ENCODE measurements at regions of chr1 and their contacts with region 1.

Region 1: DNA sequence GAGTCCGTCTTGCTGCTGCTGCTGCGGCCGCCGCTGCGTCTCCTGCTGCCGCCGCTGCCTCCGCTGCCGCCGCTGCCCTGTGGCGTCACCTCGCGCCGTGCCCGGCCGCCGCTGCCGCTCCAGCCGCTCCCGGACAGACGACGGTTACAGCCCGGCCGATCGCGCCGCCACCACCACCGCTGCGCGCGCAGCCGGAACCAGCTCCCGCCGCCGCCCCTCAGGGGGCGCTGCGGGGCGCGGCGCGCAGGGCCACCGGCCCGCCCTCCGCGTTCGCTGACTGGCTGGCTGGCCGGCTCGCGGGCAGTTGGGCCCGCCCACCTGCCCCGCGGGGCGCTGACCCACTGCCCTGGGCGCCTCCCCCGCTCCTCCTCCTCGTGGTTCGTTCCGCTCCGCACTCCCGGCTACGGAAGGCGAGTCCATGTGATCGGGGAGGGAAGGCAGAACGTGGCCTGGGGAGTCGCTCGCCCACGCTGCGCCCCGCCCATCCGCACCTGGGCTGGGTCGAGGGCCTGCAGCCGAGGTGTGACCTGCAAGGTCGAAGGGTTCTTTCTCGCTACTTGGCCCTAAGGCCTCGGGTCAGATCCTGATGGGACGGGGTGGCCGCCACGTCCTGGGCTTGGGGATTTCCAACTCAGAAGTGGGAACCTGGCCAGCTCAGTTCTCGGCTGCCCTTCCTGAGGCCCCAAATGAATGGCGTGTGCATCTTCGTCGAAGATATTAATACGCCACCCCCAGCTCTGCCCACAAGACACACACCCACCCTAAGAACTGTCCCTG is at the start of gene PTP4A2:
- DNase-seq: peak; percentile 86
- H3K4me3 ChIP-seq: peak within 1 kb of the TSS; percentile 56 to 88 (median 73)
- H3K27ac ChIP-seq: peak within 1 kb of the TSS; percentile 61
- H3K4me1 ChIP-seq: peaks cover 39% of the 10 kb centered on the region
- H3K27me3 ChIP-seq: no peaks in the 10 kb centered on the region
- CTCF ChIP-seq: peak; percentile 41 to 72
- POLR2A ChIP-seq: peak; percentile 79
- total RNA-seq, gene PTP4A2: 172 and 184 TPM in 2 replicates

Region 2: GRCh38 chr1:31587720-31588394 is 350.5 kb before region 1 on chr1:
- CTCF ChIA-PET with region 1: no interaction called
- POLR2A ChIA-PET with region 1: no interaction called
- dilution Hi-C with region 1: no loop called
- intact Hi-C with region 1: loop called (anchors 10 kb)
- DNase-seq: peak; percentile 86
- H3K4me3 ChIP-seq: no peak overlapping the region
- H3K27ac ChIP-seq: peak overlapping the region; percentile 92
- H3K4me1 ChIP-seq: peaks cover 39% of the 10 kb centered on the region
- H3K27me3 ChIP-seq: no peaks in the 10 kb centered on the region
- CTCF ChIP-seq: peak; percentile 71 to 92
- POLR2A ChIP-seq: peak; percentile 81

Region 3: DNA sequence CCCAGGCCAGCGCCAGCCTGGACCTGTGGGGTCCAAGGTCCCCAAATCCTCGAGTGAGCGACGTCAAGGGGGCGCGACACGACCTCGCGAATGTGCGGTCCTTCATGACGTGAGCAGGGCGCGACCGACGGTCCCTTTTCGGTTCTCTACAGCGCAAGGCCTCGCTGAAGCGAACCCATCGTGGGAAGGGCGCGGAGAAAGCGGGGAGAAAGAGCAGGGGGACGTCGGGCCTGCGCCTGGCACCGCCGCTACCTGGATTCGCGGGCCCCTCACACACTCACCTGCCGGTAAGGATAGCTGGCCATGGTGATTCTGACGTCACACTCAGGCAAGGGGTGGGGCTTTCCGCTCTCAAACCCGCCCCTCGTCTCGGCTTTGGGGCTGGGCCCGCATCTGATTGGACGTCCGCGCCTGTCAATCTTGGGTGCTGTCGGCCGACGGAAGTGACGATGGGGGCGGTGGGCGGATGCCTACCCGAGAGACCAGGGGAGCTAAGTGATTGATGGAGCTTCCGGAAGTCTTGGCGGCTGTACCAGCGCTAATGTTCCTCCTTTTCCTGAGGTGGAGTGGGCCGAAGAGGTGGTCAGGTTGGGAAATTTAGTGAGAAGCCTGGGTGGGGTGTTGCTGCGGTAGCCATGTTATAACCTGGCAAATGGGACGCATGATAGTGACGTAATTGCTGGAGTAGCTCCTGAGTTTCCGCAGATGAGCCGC is 293.6 kb before region 1 on chr1 and contains the start of gene PEF1:
- CTCF ChIA-PET with region 1: interaction called, 3 read pairs
- POLR2A ChIA-PET with region 1: no interaction called
- dilution Hi-C with region 1: no loop called
- intact Hi-C with region 1: loop called (anchors 10 kb)
- DNase-seq: peak; percentile 98
- H3K4me3 ChIP-seq: peak within 1 kb of the TSS; percentile 53 to 93 (median 68)
- H3K27ac ChIP-seq: peak within 1 kb of the TSS; percentile 90
- H3K4me1 ChIP-seq: peaks cover 22% of the 10 kb centered on the region
- H3K27me3 ChIP-seq: no peaks in the 10 kb centered on the region
- CTCF ChIP-seq: no peak
- POLR2A ChIP-seq: peak; percentile 33
- total RNA-seq, gene PEF1: 66.5 and 73.3 TPM in 2 replicates

Region 4: DNA sequence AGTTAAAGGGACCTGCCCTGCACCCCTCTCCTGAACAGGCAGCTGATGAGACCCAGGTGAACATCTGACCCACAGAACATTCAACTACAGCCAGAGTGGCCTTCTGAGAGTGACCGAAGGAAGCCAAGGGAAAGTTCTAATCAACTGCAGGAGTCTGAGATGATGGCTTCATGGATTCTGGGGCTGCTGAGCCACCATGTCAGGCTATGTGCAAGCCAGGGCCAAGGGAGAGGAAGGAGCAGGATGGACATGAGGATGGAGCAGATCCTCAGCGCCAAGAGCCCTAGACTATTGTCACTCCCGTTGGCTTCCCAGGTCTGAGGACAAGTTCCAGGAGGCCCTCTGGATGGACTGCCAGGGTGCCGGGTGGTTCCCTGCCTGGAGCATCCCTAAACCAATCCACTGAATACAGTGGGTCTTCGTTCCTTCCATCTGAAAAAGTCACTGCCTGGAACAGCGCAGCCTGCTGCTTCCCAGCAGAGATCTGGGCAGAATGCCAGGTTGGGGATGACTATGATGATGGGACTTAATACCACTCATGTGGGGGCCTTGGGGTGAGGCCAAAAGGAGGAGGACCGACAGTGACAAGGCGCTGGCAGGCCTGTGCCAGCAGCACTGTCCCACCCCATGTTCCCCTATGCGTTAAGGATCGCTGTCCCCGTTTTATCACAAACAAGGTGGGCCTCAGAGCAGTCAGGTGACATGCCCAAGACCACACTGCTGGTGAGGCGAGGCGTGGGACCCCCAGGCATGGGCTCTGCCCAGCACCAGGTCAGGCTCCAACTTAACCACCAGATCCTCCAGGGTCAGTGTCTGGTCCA is 142.4 kb before region 1 on chr1:
- CTCF ChIA-PET with region 1: interaction called, 4 read pairs
- POLR2A ChIA-PET with region 1: no interaction called
- dilution Hi-C with region 1: no loop called
- intact Hi-C with region 1: loop called (anchors 1 kb)
- DNase-seq: peak; percentile 34
- H3K4me3 ChIP-seq: no peak overlapping the region
- H3K27ac ChIP-seq: no peak overlapping the region
- H3K4me1 ChIP-seq: peaks cover 30% of the 10 kb centered on the region
- H3K27me3 ChIP-seq: no peaks in the 10 kb centered on the region
- CTCF ChIP-seq: no peak
- POLR2A ChIP-seq: no peak

Region 5: GRCh38 chr1:31815752-31816500 is 122.4 kb before region 1 on chr1 and contains the start of gene SPOCD1:
- CTCF ChIA-PET with region 1: interaction called, 18 read pairs
- POLR2A ChIA-PET with region 1: no interaction called
- dilution Hi-C with region 1: no loop called
- intact Hi-C with region 1: loop called (anchors 1 kb)
- DNase-seq: peak; percentile 78
- H3K4me3 ChIP-seq: peak within 1 kb of the TSS in 1 of 3 experiments; percentile 1
- H3K27ac ChIP-seq: no peak within 1 kb of the TSS
- H3K4me1 ChIP-seq: peaks cover 3% of the 10 kb centered on the region
- H3K27me3 ChIP-seq: no peaks in the 10 kb centered on the region
- CTCF ChIP-seq: peak; percentile 87 to 95
- POLR2A ChIP-seq: no peak
- total RNA-seq, gene SPOCD1: 0.27 and 24.9 TPM in 2 replicates

Region 6: GRCh38 chr1:31955917-31956736 is 17.8 kb after region 1 on chr1:
- CTCF ChIA-PET with region 1: interaction called, 197 read pairs
- POLR2A ChIA-PET with region 1: interaction called, 8 read pairs
- dilution Hi-C with region 1: no loop called
- intact Hi-C with region 1: loop called (anchors 2 kb)
- DNase-seq: peak; percentile 97
- H3K4me3 ChIP-seq: no peak overlapping the region
- H3K27ac ChIP-seq: peak overlapping the region; percentile 95
- H3K4me1 ChIP-seq: peaks cover 20% of the 10 kb centered on the region
- H3K27me3 ChIP-seq: no peaks in the 10 kb centered on the region
- CTCF ChIP-seq: peak; percentile 27 to 50
- POLR2A ChIP-seq: no peak

Region 7: DNA sequence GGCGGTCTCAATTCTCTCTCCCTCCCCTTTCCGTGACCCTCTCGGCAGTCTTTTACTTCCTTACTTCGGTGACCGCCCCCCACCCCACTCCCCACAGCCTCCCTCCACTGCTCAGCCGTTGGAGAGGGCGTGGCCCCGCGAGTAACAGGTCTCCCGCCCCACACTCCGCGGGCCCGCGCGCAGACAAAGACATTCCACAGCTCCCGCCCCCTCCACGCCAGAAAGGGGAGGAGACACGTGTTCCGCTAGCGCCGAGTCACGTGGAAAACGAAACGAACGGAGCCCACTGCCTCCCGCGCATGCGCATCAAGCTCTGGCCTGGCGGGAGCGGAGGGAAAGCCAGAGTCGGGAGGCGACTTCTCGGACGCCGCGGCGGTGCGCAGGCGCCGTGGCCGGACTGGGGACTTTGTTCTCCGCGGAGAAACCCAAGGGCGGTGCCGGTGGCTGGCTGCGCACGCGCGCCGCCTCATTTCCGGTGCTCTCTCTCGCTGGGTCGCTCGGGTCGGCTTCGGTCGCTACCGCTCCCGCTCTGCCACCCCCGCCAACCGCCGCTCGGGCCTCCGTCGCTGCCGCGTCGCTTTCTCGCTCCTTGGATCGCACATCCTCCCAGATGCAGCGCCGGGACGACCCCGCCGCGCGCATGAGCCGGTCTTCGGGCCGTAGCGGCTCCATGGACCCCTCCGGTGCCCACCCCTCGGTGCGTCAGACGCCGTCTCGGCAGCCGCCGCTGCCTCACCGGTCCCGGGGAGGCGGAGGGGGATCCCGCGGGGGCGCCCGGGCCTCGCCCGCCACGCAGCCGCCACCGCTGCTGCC is 75.2 kb after region 1 on chr1 and contains the start of gene KHDRBS1:
- CTCF ChIA-PET with region 1: no interaction called
- POLR2A ChIA-PET with region 1: no interaction called
- dilution Hi-C with region 1: no loop called
- intact Hi-C with region 1: loop called (anchors 2 kb)
- DNase-seq: peak; percentile 100
- H3K4me3 ChIP-seq: peak within 1 kb of the TSS; percentile 54 to 98 (median 94)
- H3K27ac ChIP-seq: peak within 1 kb of the TSS; percentile 96
- H3K4me1 ChIP-seq: peaks cover 22% of the 10 kb centered on the region
- H3K27me3 ChIP-seq: no peaks in the 10 kb centered on the region
- CTCF ChIP-seq: no peak
- POLR2A ChIP-seq: peak; percentile 67
- total RNA-seq, gene KHDRBS1: 185 and 194 TPM in 2 replicates

Measured in endothelial cell of umbilical vein (primary cell).